Activated CD4-positive, alpha-beta T cell treated with anti-CD3 and anti-CD28 coated beads, Interleukin-2, amount 10 ng/mL, durations not matched to agents 24 days and 14 days (primary cell): ENCODE measurements at regions of chr9 and their contacts with region 1.

Region 1: GRCh38 chr9:32968101-32969011 is 33.1 kb downstream of the APTX start:
- DNase-seq: peak; percentile 86
- H3K4me3 Mint-ChIP-seq: no peak overlapping the region
- H3K27ac Mint-ChIP-seq: no peak overlapping the region
- H3K4me1 Mint-ChIP-seq: peaks cover 2% of the 10 kb centered on the region
- H3K27me3 Mint-ChIP-seq: no peaks in the 10 kb centered on the region

Region 2: GRCh38 chr9:32292611-32293010 is 675.7 kb before region 1 on chr9:
- intact Hi-C with region 1: no loop called
- DNase-seq: no peak
- H3K4me3 Mint-ChIP-seq: no peak overlapping the region
- H3K27ac Mint-ChIP-seq: no peak overlapping the region
- H3K4me1 Mint-ChIP-seq: no peaks in the 10 kb centered on the region
- H3K27me3 Mint-ChIP-seq: peaks cover 1% of the 10 kb centered on the region

Region 3: DNA sequence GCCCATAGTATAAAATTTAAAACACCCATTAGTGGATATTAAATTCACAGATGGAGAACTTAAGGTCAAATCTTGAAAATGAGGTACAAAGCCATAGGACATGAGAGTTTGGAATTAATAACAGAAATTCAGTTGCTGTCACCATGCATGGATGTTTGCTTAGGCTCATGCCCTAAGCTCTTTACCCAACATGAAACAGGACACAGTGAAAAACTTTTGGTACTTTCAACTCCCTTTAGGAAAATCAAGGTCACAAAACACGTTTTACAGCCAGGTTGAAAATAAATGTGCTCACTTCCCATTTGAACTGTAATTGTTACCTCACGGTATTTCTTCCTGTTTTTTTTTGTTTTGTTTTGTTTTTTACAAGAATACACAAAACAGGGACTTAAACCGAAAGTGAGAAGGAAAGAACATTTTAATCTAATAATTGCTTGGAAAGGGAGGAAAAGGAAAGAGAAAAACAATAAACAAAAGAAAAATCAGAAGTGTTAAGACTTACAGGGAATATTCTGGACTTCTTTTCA is 409.9 kb before region 1 on chr9:
- intact Hi-C with region 1: no loop called
- DNase-seq: no peak
- H3K4me3 Mint-ChIP-seq: no peak overlapping the region
- H3K27ac Mint-ChIP-seq: no peak overlapping the region
- H3K4me1 Mint-ChIP-seq: peaks cover 13% of the 10 kb centered on the region
- H3K27me3 Mint-ChIP-seq: no peaks in the 10 kb centered on the region

Region 4: DNA sequence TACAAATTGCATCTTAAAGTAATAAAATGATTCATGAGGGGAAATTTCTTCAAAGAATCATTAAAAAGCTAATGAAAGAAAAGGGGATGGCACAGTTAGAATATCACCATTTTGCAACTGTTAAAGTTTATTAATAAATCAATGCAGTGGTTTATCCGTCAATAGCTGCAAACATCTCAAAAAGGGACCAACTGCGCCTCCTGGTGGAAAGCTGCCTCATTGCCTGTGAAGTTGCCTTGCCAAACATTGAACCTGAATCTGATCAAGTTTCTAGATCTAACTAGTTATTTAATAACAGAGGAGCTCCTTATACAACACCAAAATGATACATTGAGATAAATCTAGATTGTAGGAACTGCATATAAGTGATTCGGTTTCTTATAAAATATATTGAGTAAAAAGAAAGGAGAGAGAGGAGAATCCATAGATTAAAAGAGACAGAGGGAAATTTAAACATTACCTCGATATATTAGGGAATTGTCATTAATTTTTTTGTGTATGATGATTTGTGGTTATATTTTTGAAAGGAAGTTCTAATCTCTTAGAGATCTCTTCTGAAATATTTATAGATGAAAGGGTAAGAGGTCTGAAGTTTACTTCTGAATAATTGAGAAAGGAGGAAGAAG is 388.5 kb before region 1 on chr9:
- intact Hi-C with region 1: loop called (anchors 2 kb)
- DNase-seq: peak; percentile 93
- H3K4me3 Mint-ChIP-seq: no peak overlapping the region
- H3K27ac Mint-ChIP-seq: no peak overlapping the region
- H3K4me1 Mint-ChIP-seq: peaks cover 7% of the 10 kb centered on the region
- H3K27me3 Mint-ChIP-seq: peaks cover 31% of the 10 kb centered on the region

Region 5: GRCh38 chr9:32589083-32589723 is 379.2 kb before region 1 on chr9:
- intact Hi-C with region 1: loop called (anchors 1 kb)
- DNase-seq: no peak
- H3K4me3 Mint-ChIP-seq: no peak overlapping the region
- H3K27ac Mint-ChIP-seq: no peak overlapping the region
- H3K4me1 Mint-ChIP-seq: no peaks in the 10 kb centered on the region
- H3K27me3 Mint-ChIP-seq: peaks cover 23% of the 10 kb centered on the region

Region 6: GRCh38 chr9:32839013-32839885 is 129.1 kb before region 1 on chr9:
- intact Hi-C with region 1: loop called (anchors 10 kb)
- DNase-seq: no peak
- H3K4me3 Mint-ChIP-seq: no peak overlapping the region
- H3K27ac Mint-ChIP-seq: no peak overlapping the region
- H3K4me1 Mint-ChIP-seq: no peaks in the 10 kb centered on the region
- H3K27me3 Mint-ChIP-seq: peaks cover under 1% of the 10 kb centered on the region

Region 7: GRCh38 chr9:32954642-32955041 is 13.7 kb before region 1 on chr9:
- intact Hi-C with region 1: no loop called
- DNase-seq: no peak
- H3K4me3 Mint-ChIP-seq: no peak overlapping the region
- H3K27ac Mint-ChIP-seq: no peak overlapping the region
- H3K4me1 Mint-ChIP-seq: no peaks in the 10 kb centered on the region
- H3K27me3 Mint-ChIP-seq: no peaks in the 10 kb centered on the region